CD4-positive, alpha-beta T cell (primary cell): ENCODE measurements at regions of chr3 and their contacts with region 1.

Region 1: DNA sequence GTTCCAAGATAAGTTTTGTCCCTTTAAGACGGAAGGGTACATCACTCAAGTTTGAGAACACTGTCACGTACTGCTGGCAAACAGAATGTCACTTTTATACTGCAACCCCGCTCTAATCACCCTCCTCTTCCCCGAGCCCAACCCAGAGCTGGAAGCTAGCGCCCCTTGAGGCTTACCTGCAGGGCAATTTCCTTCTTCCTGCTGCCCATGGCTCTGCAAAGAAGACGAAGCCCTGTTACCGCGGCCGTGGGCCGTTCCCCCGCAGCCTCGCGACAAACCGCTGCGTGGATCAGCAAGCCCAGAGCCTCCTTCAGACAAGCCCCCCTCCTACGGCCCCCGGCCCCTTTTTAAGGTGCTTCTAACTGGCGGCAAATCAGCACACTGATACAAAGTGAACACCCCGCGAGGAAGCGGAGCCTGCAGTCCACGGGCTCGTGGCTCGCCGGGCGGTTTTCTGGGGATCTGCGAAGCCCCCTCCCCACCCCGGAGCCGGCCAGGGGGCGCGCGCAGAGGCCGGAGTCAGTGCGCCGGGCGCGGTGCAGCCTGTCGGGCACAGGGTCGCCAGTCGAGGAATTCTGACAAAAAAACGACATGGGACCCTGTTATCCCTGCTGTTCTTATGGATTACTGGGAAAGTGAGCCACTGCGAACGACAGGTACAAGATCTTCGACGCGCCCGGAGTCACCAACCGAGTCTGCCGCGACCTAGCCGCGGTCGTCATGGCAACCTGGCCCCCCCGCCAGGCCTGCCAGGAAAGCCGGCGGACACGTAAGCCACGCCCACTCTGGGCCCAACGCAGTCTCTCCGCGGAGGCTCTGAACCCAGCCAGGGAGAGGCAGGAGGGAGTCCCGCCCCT is at the start of gene NME9:
- DNase-seq: peak; percentile 80 to 97 (median 90)
- ATAC-seq: peak; percentile 85
- H3K4me3 ChIP-seq: peak within 1 kb of the TSS; percentile 69
- H3K4me3 Mint-ChIP-seq: peak within 1 kb of the TSS; percentile 98
- H3K27ac ChIP-seq: peak within 1 kb of the TSS; percentile 49 to 81
- H3K27ac Mint-ChIP-seq: peak within 1 kb of the TSS; percentile 88
- H3K4me1 ChIP-seq: peaks cover 20% of the 10 kb centered on the region
- H3K4me1 Mint-ChIP-seq: peaks cover 37% of the 10 kb centered on the region
- H3K27me3 ChIP-seq: no peaks in the 10 kb centered on the region
- H3K27me3 Mint-ChIP-seq: no peaks in the 10 kb centered on the region
- CTCF ChIP-seq: peak; percentile 71
- total RNA-seq, gene NME9: 0.80 TPM in 1 of 2 experiments, not detected in the other

Region 2: DNA sequence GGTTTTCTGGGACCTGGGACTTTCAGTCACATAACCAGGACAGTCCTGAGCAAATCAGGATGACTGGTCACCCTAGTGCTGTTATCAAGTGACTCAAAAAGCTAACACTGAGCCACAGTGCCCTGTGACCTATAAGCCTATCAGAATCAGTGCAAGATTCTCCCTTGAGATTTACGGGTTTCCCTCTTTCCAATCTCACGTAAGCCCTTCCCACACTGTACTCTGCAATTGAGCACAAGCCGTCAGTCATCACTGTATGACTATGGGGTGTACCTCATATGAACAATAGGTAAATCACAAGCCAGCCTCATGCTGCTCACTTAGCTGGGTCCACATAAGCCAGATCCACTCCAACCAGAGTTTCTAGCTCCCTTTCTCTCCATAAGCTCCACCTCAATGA is 340.4 kb before region 1 on chr3:
- CTCF ChIA-PET with region 1: no interaction called
- POLR2A ChIA-PET with region 1: no interaction called
- intact Hi-C with region 1: no loop called
- DNase-seq: no peak
- ATAC-seq: no peak
- H3K4me3 ChIP-seq: no peak overlapping the region
- H3K4me3 Mint-ChIP-seq: no peak overlapping the region
- H3K27ac ChIP-seq: no peak overlapping the region
- H3K27ac Mint-ChIP-seq: no peak overlapping the region
- H3K4me1 ChIP-seq: no peaks in the 10 kb centered on the region
- H3K4me1 Mint-ChIP-seq: no peaks in the 10 kb centered on the region
- H3K27me3 ChIP-seq: no peaks in the 10 kb centered on the region
- H3K27me3 Mint-ChIP-seq: no peaks in the 10 kb centered on the region
- CTCF ChIP-seq: no peak

Region 3: GRCh38 chr3:138195481-138195880 is 133.9 kb before region 1 on chr3:
- CTCF ChIA-PET with region 1: no interaction called
- POLR2A ChIA-PET with region 1: no interaction called
- intact Hi-C with region 1: no loop called
- DNase-seq: no peak
- ATAC-seq: no peak
- H3K4me3 ChIP-seq: no peak overlapping the region
- H3K4me3 Mint-ChIP-seq: no peak overlapping the region
- H3K27ac ChIP-seq: no peak overlapping the region
- H3K27ac Mint-ChIP-seq: no peak overlapping the region
- H3K4me1 ChIP-seq: peaks cover 2% of the 10 kb centered on the region
- H3K4me1 Mint-ChIP-seq: peaks cover 57% of the 10 kb centered on the region
- H3K27me3 ChIP-seq: no peaks in the 10 kb centered on the region
- H3K27me3 Mint-ChIP-seq: no peaks in the 10 kb centered on the region
- CTCF ChIP-seq: no peak

Region 4: GRCh38 chr3:138263104-138263503 is 66.3 kb before region 1 on chr3:
- CTCF ChIA-PET with region 1: interaction called, 3 read pairs
- POLR2A ChIA-PET with region 1: no interaction called
- intact Hi-C with region 1: loop called (anchors 5 to 10 kb)
- DNase-seq: no peak
- ATAC-seq: no peak
- H3K4me3 ChIP-seq: no peak overlapping the region
- H3K4me3 Mint-ChIP-seq: no peak overlapping the region
- H3K27ac ChIP-seq: no peak overlapping the region
- H3K27ac Mint-ChIP-seq: no peak overlapping the region
- H3K4me1 ChIP-seq: no peaks in the 10 kb centered on the region
- H3K4me1 Mint-ChIP-seq: no peaks in the 10 kb centered on the region
- H3K27me3 ChIP-seq: no peaks in the 10 kb centered on the region
- H3K27me3 Mint-ChIP-seq: no peaks in the 10 kb centered on the region
- CTCF ChIP-seq: no peak

Region 5: GRCh38 chr3:138381950-138382688 is 52.8 kb after region 1 on chr3:
- CTCF ChIA-PET with region 1: no interaction called
- POLR2A ChIA-PET with region 1: no interaction called
- intact Hi-C with region 1: no loop called
- DNase-seq: peak in 2 of 14 experiments; percentile 45 to 51
- ATAC-seq: no peak
- H3K4me3 ChIP-seq: no peak overlapping the region
- H3K4me3 Mint-ChIP-seq: no peak overlapping the region
- H3K27ac ChIP-seq: no peak overlapping the region
- H3K27ac Mint-ChIP-seq: no peak overlapping the region
- H3K4me1 ChIP-seq: no peaks in the 10 kb centered on the region
- H3K4me1 Mint-ChIP-seq: no peaks in the 10 kb centered on the region
- H3K27me3 ChIP-seq: peaks cover 0 to 4% of the 10 kb centered on the region in 2 experiments
- H3K27me3 Mint-ChIP-seq: peaks cover 13% of the 10 kb centered on the region
- CTCF ChIP-seq: no peak

Region 6: GRCh38 chr3:138426226-138426625 is 96.9 kb after region 1 on chr3:
- CTCF ChIA-PET with region 1: no interaction called
- POLR2A ChIA-PET with region 1: no interaction called
- intact Hi-C with region 1: no loop called
- DNase-seq: no peak
- ATAC-seq: no peak
- H3K4me3 ChIP-seq: no peak overlapping the region
- H3K4me3 Mint-ChIP-seq: no peak overlapping the region
- H3K27ac ChIP-seq: no peak overlapping the region
- H3K27ac Mint-ChIP-seq: no peak overlapping the region
- H3K4me1 ChIP-seq: no peaks in the 10 kb centered on the region
- H3K4me1 Mint-ChIP-seq: no peaks in the 10 kb centered on the region
- H3K27me3 ChIP-seq: no peaks in the 10 kb centered on the region
- H3K27me3 Mint-ChIP-seq: peaks cover 1% of the 10 kb centered on the region
- CTCF ChIP-seq: no peak